HepG2 (cell line): ENCODE measurements at regions of chr3 and their contacts with region 1.

Region 1: GRCh38 chr3:146326670-146327543 is 76.0 kb upstream of the PLSCR4 start:
- DNase-seq: peak; percentile 46
- ATAC-seq: peak; percentile 92
- H3K4me3 ChIP-seq: no peak overlapping the region
- H3K27ac ChIP-seq: no peak overlapping the region
- H3K4me1 ChIP-seq: peaks cover 10% of the 10 kb centered on the region; the same call in 1 of the 2 replicates
- H3K27me3 ChIP-seq: no peaks in the 10 kb centered on the region; a peak in 1 of 5 replicates
- CTCF ChIP-seq: peak; percentile 77
- EP300 ChIP-seq: no peak
- POLR2A ChIP-seq: no peak
- RAD21 ChIP-seq: peak; percentile 67

Region 2: DNA sequence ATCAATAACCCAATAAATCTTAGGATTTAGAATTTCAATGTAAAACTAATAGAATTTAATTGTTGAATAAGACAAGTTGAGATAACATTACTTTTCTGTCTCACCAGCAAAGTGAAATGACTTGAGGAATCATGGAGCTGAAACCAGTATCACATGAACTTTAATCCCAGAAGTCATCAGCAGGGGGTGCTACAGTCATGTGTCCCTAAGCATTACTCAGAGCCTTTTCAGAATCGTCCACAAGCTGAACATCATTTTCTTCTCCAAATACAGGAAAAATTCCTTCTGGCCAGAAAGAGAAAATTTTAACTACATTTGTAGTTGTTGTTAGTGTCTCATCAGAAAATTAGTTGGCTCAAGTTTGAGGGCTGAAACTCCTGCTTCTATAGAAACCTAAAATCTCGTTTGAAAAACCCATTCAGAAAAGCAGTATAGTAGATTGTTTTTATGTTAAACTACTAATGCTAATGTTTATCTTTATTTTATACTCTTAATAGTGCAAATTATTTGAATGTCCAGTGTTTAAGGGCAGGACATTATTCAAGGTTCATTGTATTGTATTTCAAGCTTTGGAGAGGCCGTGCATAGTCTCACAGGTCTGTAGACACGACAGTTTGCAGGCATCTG is 550.0 kb before region 1 on chr3:
- CTCF ChIA-PET with region 1: no interaction called
- POLR2A ChIA-PET with region 1: no interaction called
- in situ Hi-C with region 1: no loop called
- intact Hi-C with region 1: loop called (anchors 1 kb)
- DNase-seq: peak; percentile 47
- ATAC-seq: peak; percentile 77
- H3K4me3 ChIP-seq: no peak overlapping the region
- H3K27ac ChIP-seq: no peak overlapping the region
- H3K4me1 ChIP-seq: no peaks in the 10 kb centered on the region
- H3K27me3 ChIP-seq: no peaks in the 10 kb centered on the region
- CTCF ChIP-seq: peak; percentile 72
- EP300 ChIP-seq: no peak
- POLR2A ChIP-seq: no peak
- RAD21 ChIP-seq: no peak

Region 3: DNA sequence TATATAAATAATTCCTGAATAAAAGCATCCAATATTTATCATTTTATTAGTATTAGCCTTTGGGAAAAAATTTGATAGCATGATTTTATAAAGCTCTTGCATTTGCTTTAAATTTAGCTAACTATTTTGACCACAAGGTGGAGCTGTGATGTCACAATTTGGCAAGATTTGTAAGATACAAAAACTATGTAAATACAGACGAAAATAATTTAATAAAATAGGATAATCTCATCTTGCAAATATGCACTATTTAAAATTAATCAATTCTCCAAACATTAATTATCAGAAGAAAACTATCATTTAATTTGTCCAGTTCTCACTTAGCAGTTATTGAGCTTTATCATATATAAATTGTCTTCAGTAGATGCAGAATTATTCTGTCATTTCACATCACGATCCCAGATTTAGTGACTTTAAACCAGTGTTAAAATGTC is 261.3 kb before region 1 on chr3:
- CTCF ChIA-PET with region 1: interaction called, 7 read pairs
- POLR2A ChIA-PET with region 1: no interaction called
- in situ Hi-C with region 1: loop called (anchors 5 kb)
- intact Hi-C with region 1: loop called (anchors 1 kb)
- DNase-seq: peak; percentile 50
- ATAC-seq: no peak
- H3K4me3 ChIP-seq: no peak overlapping the region
- H3K27ac ChIP-seq: no peak overlapping the region
- H3K4me1 ChIP-seq: no peaks in the 10 kb centered on the region
- H3K27me3 ChIP-seq: no peaks in the 10 kb centered on the region; a peak in 1 of 5 replicates
- CTCF ChIP-seq: peak; percentile 49
- EP300 ChIP-seq: no peak
- POLR2A ChIP-seq: no peak
- RAD21 ChIP-seq: no peak

Region 4: DNA sequence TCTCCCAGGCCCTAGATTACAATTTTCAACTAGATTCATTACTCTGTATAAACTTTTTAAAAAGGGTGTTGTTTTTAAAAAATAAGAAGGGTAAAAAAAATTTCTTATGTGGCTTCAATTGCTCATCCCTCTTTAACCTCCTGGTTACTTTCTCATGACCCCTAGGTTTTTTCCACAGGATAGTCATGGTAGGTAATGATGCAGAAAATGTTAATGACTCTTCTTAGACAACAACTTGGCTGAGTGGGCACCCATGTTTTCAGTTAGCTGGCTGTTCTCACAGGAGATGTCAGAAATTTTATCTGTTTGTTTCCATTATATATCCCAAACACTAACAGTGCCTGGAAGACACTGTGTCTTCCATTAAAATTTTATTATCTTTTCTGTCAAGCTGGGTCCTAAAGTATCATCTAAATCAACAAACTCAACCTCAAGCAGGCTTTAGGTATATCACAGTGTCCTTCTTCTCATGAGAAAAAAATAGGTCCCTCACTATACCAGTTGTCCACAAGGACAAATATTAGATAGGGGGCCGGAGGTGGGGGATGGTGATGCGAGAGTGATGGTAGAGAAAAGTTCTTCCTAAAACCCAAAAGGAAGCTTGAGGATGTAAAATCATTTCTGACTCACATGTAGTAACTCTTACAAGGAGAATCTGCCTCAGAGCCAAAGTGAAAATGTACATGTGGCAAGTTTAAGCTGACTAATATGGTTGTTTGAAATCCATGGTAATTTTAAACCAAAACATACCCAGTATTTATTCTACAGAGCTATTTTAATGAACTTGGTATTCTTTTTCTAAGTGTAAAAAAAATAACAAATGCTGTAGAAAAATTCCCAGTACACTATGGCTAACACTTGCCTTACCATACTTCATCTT is 209.3 kb before region 1 on chr3:
- CTCF ChIA-PET with region 1: no interaction called
- POLR2A ChIA-PET with region 1: no interaction called
- in situ Hi-C with region 1: no loop called
- intact Hi-C with region 1: loop called (anchors 5 kb)
- DNase-seq: no peak
- ATAC-seq: no peak
- H3K4me3 ChIP-seq: no peak overlapping the region
- H3K27ac ChIP-seq: no peak overlapping the region
- H3K4me1 ChIP-seq: peaks cover 40% of the 10 kb centered on the region
- H3K27me3 ChIP-seq: no peaks in the 10 kb centered on the region
- CTCF ChIP-seq: no peak
- EP300 ChIP-seq: no peak
- POLR2A ChIP-seq: no peak
- RAD21 ChIP-seq: no peak

Region 5: DNA sequence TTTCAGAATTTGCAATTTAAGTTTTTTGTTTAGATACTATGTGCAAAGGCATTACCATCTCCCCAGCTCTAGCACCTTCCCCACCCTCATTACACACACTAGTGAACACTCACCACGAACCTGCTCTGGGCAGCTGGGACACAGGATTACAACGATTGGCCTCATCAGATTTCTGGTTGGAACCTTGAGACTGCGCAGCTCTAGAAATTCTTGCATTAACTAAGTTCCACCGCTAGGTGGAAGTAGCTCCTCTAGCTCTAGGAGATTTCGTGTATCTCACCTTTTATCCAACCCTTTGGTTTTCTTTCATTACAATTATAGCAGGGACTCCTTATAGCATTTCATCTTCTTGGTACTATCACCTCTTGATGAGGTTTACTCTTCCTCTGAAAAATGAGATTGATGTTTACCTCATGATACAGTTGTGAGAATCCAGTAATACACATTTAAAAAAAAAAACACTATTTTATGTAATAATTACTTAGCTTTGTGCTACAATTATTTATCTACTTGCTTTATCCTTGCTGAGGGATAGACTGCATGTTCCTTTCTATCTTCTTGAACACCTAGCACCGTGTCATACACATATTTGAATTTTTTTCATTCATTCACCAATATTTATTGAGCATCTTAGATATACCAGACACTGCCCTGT is 137.3 kb before region 1 on chr3:
- CTCF ChIA-PET with region 1: interaction called, 19 read pairs
- POLR2A ChIA-PET with region 1: interaction called, 7 read pairs
- in situ Hi-C with region 1: no loop called
- intact Hi-C with region 1: loop called (anchors 1 kb)
- DNase-seq: peak; percentile 49
- ATAC-seq: peak; percentile 94
- H3K4me3 ChIP-seq: no peak overlapping the region
- H3K27ac ChIP-seq: no peak overlapping the region
- H3K4me1 ChIP-seq: no peaks in the 10 kb centered on the region
- H3K27me3 ChIP-seq: no peaks in the 10 kb centered on the region
- CTCF ChIP-seq: peak; percentile 80
- EP300 ChIP-seq: no peak
- POLR2A ChIP-seq: no peak
- RAD21 ChIP-seq: peak; percentile 56

Region 6: GRCh38 chr3:146218880-146219866 is 107.7 kb before region 1 on chr3:
- CTCF ChIA-PET with region 1: interaction called, 41 read pairs
- POLR2A ChIA-PET with region 1: interaction called, 9 read pairs
- in situ Hi-C with region 1: loop called (anchors 5 kb)
- intact Hi-C with region 1: loop called (anchors 1 kb)
- DNase-seq: peak; percentile 6
- ATAC-seq: no peak
- H3K4me3 ChIP-seq: no peak overlapping the region; a peak in 2 of 6 replicates
- H3K27ac ChIP-seq: no peak overlapping the region
- H3K4me1 ChIP-seq: peaks cover 45% of the 10 kb centered on the region
- H3K27me3 ChIP-seq: no peaks in the 10 kb centered on the region
- CTCF ChIP-seq: peak; percentile 54
- EP300 ChIP-seq: no peak
- POLR2A ChIP-seq: no peak
- RAD21 ChIP-seq: no peak; the same call in 1 of the 2 replicates

Region 7: DNA sequence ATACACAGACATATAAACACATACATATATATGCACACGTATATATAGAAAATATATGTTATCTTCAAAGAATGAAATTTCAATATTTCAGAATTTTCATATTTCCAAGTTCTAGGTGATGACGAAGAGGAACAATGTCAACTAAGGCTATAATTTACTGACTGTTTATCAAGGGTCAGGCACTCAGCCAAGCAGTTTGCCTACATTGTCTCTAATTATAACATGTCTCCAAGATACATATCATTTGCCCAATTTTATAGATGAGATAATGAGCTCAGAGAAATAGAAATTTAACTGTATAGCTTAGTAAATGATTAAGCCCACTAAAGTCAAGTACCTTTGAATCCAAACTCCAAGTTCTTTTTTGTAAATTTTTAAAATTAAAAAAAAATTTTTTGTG is 23.9 kb after region 1 on chr3:
- CTCF ChIA-PET with region 1: no interaction called
- POLR2A ChIA-PET with region 1: no interaction called
- in situ Hi-C with region 1: no loop called
- intact Hi-C with region 1: no loop called
- DNase-seq: no peak
- ATAC-seq: no peak
- H3K4me3 ChIP-seq: no peak overlapping the region
- H3K27ac ChIP-seq: no peak overlapping the region
- H3K4me1 ChIP-seq: no peaks in the 10 kb centered on the region
- H3K27me3 ChIP-seq: no peaks in the 10 kb centered on the region; a peak in 1 of 5 replicates
- CTCF ChIP-seq: no peak
- EP300 ChIP-seq: no peak
- POLR2A ChIP-seq: no peak
- RAD21 ChIP-seq: no peak